Right lobe of liver (tissue), 6 donors: ENCODE measurements at regions of chr21 and their contacts with region 1.

Region 1: DNA sequence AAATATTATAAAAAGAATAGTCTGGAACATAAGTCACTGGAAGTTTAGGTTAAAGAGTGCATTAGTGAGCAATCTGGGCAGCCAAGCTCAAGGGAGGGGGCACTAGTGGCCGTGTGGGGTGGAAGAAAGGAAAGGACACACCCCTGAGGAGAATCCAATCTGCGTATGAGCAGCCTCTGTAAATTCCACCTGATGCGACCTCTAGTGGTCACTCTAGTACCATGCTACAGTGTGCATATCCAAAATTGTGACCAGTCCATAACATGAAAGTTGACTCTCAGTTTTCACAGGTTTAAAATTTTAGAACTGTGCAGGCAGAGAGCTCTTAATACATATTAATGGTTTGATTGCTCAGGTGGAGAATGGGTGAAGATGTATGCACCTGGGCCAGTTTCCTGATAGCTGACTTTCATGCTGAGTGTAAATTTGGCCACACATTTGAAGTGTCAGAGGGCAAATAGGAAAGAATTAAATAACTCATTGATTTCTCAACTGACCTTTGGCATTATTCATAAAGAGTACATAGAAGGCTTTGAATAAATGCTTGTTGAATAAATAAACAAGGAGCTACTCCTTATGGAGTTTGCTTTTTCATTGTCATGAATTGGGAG is 105.9 kb upstream of the C21orf91 start:
- DNase-seq: peak in 1 of 3 donors; percentile 58
- ATAC-seq: peak; percentile 87 to 96 (median 94)
- H3K4me3 ChIP-seq: no peak overlapping the region
- H3K27ac ChIP-seq: no peak overlapping the region
- H3K4me1 ChIP-seq: no peaks in the 10 kb centered on the region
- H3K27me3 ChIP-seq: no peaks in the 10 kb centered on the region
- CTCF ChIP-seq: peak; percentile 62 to 88 (median 88)
- POLR2A ChIP-seq: no peak

Region 2: GRCh38 chr21:17688912-17689874 is 235.9 kb before region 1 on chr21:
- intact Hi-C with region 1: loop called in 1 of 2 experiments (anchors 10 kb)
- DNase-seq: peak in 1 of 3 donors; percentile 45
- ATAC-seq: no peak
- H3K4me3 ChIP-seq: no peak overlapping the region
- H3K27ac ChIP-seq: no peak overlapping the region
- H3K4me1 ChIP-seq: no peaks in the 10 kb centered on the region
- H3K27me3 ChIP-seq: no peaks in the 10 kb centered on the region
- CTCF ChIP-seq: peak in 2 of 4 donors; percentile 5 to 18
- POLR2A ChIP-seq: no peak

Region 3: DNA sequence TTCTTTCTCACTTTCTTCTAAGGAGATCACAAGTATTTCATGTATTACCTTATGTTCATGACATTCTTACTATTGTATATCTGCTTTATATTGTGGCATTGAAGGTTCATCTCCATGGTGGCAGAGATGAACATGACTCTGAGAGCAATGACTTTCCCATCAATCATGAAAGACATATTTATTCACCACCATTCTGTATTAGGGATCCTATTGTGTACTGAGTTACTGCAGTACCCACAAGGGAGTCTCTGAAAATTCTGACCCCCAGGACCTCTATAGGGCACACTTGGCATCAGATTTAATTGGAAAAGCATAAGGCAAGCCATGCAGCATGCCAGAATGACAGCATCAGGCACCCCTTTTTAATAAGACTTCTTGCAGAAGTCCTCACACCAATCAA is 84.0 kb before region 1 on chr21:
- intact Hi-C with region 1: no loop called
- DNase-seq: no peak
- ATAC-seq: no peak
- H3K4me3 ChIP-seq: no peak overlapping the region
- H3K27ac ChIP-seq: no peak overlapping the region
- H3K4me1 ChIP-seq: no peaks in the 10 kb centered on the region
- H3K27me3 ChIP-seq: no peaks in the 10 kb centered on the region
- CTCF ChIP-seq: no peak
- POLR2A ChIP-seq: no peak